ENCODE measurements at regions of chr12 and their contacts with region 1.

Region 1: DNA sequence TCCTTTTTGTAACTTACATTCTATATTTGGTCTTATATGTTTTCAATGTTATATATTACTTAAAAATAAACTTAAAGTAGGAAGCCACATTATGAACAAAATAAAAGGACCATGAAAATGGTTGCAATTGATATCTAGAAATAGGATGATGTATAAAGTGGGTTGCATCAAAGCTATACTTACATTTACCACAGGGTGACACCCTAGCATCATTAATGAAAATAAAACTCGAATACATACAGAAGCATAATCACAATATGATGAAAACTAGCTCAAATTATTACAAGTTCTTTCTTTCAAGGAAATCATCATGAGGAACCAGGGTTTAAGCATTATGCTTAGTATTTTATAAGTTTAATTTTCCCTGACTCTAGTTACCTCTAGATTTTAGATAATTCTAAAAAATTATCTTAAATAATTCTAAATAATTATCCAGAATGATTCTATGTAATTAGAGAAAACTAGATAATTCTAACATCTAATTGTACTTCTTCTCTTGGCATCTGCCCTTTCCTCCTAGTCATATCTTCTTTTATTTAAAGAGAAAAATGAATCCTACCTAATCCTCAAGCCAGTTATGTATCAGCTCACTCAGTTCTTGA is 31.2 kb downstream of the TAS2R7 start:
- DNase-seq: peak; percentile 13
- CTCF ChIP-seq: peak; percentile 36

Region 2: GRCh38 chr12:10936506-10936905 is 165.3 kb after region 1 on chr12:
- in situ Hi-C with region 1: no loop called
- DNase-seq: no peak
- CTCF ChIP-seq: no peak

Region 3: DNA sequence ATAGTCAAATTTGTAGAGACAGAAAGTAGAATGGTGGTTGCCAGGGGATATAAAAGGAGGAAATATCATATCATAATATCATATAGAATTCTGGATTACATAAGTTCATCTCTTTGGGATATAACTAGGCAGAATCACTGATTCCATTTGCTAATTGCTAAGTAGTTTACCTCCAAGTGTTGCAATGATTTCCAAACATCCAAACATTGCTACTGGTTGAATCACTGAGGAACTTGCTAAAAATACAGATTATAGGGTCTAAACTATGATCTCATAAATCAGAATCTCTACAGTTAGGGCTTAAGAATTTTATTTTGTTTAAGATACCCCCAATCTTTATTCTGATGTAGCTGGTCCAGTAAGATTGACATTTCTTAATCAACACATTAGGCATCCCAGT is 431.6 kb after region 1 on chr12:
- in situ Hi-C with region 1: loop called (anchors 10 kb)
- DNase-seq: no peak
- CTCF ChIP-seq: no peak

Region 4: DNA sequence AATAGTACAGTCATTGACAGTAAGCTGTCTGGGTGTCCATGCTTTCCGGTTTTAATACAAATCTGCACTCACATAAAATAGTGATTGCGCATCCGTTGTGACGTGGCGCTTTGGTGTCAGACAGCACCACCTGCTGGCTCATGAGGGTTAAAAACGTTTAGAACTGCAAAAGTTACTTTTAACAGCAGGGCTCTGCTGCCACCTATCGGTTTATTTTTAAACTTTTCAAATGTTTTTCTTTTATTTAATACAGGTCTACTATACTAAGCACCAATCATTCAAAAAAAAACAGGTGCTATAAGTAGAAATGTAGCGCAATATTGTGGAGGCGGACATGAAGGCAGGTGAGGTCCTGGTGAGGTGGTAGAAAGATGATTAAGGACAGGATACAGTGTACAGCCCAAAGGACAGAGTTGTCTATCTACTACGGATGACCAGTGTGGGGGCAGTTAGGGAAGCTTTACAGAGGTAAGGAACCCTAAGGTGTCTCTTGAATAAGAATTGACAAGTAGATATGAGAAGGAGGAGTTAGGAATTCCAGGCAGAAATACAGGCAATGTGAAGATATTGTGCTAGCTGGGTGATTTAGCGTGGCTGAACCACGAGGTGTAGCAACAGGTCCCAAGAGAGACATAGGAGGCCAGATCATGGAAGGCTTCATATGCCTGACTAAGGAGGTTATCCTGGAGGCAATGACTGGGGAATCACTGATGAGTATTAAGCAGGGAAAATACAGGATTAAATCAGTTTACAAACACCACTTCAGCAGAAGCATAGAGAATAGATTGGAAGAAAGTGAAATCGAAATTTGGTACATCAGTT is 715.6 kb after region 1 on chr12:
- in situ Hi-C with region 1: loop called (anchors 10 kb)
- DNase-seq: peak; percentile 72
- CTCF ChIP-seq: peak; percentile 75

Measured in GM13976 (cell line).